Ascending aorta (tissue), 2 donors: ENCODE measurements at regions of chr18 and their contacts with region 1.

Region 1: DNA sequence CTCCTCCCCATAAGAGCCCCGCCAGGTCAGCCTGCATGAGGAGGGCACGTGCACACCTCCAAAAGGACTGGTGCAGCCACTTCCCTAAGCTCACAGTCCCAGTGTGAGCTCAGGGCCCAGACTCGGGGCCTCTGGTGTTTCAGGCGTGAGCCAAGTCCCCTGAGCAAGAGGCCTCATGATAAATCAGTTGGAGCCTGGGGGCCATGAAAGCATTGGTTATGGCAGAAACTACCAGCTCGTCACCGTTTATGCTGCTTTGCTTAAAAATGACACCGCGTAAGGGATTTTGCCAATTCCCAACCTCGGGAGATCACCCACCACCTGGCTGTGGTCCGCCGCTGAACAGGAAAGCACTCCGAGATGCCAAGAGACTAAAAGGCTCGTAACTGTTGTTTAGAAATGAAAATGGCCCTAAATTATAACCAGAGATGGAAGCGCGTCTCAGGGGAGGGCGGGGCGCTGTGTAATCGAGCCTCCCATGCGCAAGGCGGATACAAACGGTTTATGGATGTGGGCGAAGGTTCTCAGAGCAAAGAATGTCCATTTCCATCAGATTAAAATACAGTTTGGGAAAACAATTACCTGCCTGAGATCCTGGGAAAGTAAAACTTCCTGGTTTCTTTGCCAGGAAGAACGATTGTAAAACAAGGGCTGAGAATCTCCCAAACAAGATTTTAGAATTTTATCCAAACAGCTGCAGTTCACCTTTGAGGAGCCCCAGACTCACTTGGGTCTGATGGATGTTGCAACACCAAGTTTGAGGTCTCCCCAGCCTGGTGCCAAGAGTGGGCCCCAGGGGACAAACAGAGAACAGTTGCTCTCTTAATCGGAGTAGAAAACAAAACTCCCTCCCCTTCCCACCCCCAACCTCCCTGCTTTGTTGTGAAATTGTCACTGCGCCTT is 141.4 kb downstream of the BCL2 start:
- DNase-seq: no peak
- H3K4me3 ChIP-seq: no peak overlapping the region
- H3K27ac ChIP-seq: peak overlapping the region in 1 of 2 donors; percentile 0
- H3K4me1 ChIP-seq: peaks cover 0 to 38% of the 10 kb centered on the region in 2 donors
- H3K27me3 ChIP-seq: no peaks in the 10 kb centered on the region
- CTCF ChIP-seq: no peak

Region 2: DNA sequence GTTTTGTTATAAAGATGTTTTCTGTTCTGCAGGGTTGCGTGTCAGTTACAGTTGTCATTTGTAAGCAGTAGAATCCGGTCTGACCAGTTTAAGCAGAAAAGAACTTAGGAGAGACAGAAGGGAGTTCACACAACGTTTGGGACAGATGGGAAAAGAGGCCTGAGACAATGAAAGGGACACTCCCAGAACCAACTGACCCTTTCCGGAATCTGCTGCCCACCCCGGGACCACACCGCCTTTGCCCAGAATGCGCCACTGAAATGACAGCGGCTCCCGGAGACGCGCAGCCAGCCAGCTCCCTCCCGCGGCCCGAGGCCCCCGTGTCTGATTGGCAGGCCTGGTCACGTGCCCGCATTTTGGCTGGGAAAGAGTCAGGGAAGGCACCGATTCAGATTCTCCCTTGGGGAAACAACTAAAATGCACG is 103.2 kb before region 1 on chr18:
- intact Hi-C with region 1: no loop called
- DNase-seq: peak; percentile 18 to 85
- H3K4me3 ChIP-seq: peak overlapping the region; percentile 42 to 61
- H3K27ac ChIP-seq: no peak overlapping the region
- H3K4me1 ChIP-seq: peaks cover 0 to 3% of the 10 kb centered on the region in 2 donors
- H3K27me3 ChIP-seq: no peaks in the 10 kb centered on the region
- CTCF ChIP-seq: no peak

Region 3: GRCh38 chr18:63161761-63162195 is 16.4 kb before region 1 on chr18:
- intact Hi-C with region 1: loop called (anchors 2 kb)
- DNase-seq: peak; percentile 76 to 91
- H3K4me3 ChIP-seq: no peak overlapping the region
- H3K27ac ChIP-seq: peak overlapping the region; percentile 63 to 83
- H3K4me1 ChIP-seq: peaks cover 12 to 50% of the 10 kb centered on the region in 2 donors
- H3K27me3 ChIP-seq: no peaks in the 10 kb centered on the region
- CTCF ChIP-seq: no peak